Left ventricle myocardium superior (tissue), 1 donor: ENCODE measurements at regions of chr5 and their contacts with region 1.

Region 1: GRCh38 chr5:37837414-37838032 is 2.3 kb downstream of the GDNF start:
- DNase-seq: peak; percentile 86
- ATAC-seq: peak; percentile 82

Region 2: DNA sequence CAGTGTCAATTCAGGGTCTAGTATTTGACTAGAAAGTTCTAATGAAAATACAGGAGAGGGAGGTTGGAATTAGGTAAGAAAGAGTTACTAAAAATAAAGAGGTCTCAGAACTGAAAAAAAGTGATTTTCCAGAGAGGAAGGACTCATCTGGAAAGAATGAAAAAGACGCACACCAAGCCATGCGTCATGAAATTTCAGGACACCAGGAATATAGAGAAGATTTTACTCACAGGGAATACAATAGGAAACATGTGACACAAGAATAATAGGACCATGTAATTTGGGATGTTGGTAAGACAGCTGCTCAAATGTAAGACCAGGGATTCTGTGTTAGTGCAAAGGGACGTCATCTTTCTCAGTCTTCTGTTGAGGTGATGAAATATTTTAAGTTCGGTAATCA is 222.3 kb before region 1 on chr5:
- intact Hi-C with region 1: no loop called
- DNase-seq: no peak
- ATAC-seq: no peak

Region 3: DNA sequence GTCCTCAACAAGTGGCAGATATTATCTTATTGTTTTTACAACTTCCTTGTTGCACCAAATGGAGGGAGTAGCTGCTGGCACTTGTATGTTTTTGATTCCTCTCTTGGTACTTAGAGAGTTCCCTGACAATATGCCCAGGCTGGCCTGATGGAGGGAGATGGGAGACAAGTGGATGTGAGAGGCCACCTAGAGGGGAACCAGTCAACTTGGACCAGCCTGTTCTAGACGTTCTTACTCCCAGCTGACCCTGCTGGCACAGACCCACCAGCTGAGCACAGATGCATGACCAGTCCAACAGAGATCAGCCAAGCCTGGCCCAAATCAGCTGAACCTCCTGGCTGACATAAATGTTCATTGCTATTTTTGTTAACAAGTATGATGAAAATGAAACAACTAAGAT is 63.2 kb after region 1 on chr5:
- intact Hi-C with region 1: no loop called
- DNase-seq: peak; percentile 84
- ATAC-seq: peak; percentile 98

Region 4: GRCh38 chr5:38193015-38193581 is 355.6 kb after region 1 on chr5:
- intact Hi-C with region 1: loop called (anchors 5 kb)
- DNase-seq: peak; percentile 74
- ATAC-seq: peak; percentile 78